ENCODE measurements at regions of chr4 and their contacts with region 1.

Region 1: GRCh38 chr4:139171876-139172691 is 4.9 kb downstream of the ELF2 start:
- DNase-seq: no peak
- H3K4me3 ChIP-seq: no peak overlapping the region
- H3K27ac ChIP-seq: peak overlapping the region in 1 of 2 donors; percentile 58
- H3K4me1 ChIP-seq: peaks cover 0 to 68% (median 27%) of the 10 kb centered on the region in 4 donors
- H3K27me3 ChIP-seq: no peaks in the 10 kb centered on the region
- CTCF ChIP-seq: no peak

Region 2: GRCh38 chr4:139099366-139099982 is 72.6 kb before region 1 on chr4:
- intact Hi-C with region 1: loop called (anchors 5 kb)
- DNase-seq: peak; percentile 37 to 75
- H3K4me3 ChIP-seq: no peak overlapping the region
- H3K27ac ChIP-seq: no peak overlapping the region
- H3K4me1 ChIP-seq: peaks cover 0 to 4% (median 0%) of the 10 kb centered on the region in 4 donors
- H3K27me3 ChIP-seq: no peaks in the 10 kb centered on the region
- CTCF ChIP-seq: peak; percentile 76 to 78

Region 3: DNA sequence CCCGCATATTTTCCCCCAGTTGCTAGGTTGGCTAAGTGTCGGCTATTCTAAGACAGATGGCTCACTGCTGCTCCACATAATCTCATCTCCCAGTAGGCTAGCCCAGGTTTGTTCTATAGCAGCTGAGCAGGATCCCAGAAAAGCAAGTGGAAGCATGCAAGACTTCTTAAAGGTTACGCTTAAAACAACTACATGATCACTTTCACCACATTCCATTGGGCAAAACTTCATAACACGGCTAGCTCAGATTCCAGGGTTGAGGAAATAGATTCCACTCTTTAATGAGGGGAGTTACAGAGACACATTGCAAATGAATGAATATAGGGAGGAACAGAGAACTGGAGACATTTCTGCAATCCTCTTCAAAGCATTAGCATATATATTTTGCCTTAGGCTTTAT is 268.9 kb after region 1 on chr4:
- intact Hi-C with region 1: no loop called
- DNase-seq: no peak
- H3K4me3 ChIP-seq: no peak overlapping the region
- H3K27ac ChIP-seq: no peak overlapping the region
- H3K4me1 ChIP-seq: no peaks in the 10 kb centered on the region
- H3K27me3 ChIP-seq: no peaks in the 10 kb centered on the region
- CTCF ChIP-seq: no peak